Activated CD8-positive, alpha-beta memory T cell treated with anti-CD3 and anti-CD28 coated beads, Interleukin-2, amount 10 ng/mL, durations not matched to agents 7 days and 5 days (primary cell): ENCODE measurements at regions of chr3 and their contacts with region 1.

Region 1: DNA sequence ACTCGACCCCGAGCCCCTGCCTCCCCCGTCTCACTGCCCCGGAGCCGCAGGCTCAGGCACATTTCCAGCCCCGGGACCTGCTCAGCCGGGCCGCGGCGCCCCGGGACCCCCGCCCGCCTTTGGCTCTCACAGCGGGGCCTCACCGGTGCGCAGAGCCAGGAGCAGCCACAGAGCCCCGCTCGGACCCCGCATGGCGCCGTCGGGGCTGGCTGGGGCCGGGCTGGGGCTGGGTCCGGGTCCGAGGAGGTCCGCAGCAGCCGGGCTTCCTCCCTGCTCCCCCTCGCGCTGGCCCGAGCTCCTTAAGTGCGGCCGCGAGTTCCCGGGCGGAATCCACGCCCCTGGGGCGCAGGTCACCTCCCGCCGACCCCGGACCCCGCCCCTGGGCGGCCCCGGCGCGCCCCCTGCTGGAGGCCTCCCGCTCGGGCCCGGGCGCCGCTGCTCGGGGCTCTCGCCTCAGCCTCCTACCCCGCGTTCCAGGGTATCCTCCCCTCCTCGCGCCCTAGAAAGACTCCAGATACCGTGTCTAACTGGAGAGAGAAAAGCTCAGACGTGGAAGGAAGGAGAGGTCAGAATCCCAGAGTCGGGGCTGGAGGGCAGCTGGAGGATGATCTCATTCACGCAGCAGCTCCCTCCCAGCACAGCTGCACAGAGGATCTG is at the start of gene MELTF:
- DNase-seq: peak; percentile 71
- ATAC-seq: peak; percentile 91
- H3K4me3 Mint-ChIP-seq: peak within 1 kb of the TSS; percentile 69
- H3K27ac Mint-ChIP-seq: no peak within 1 kb of the TSS
- H3K4me1 Mint-ChIP-seq: peaks cover 10% of the 10 kb centered on the region
- H3K27me3 Mint-ChIP-seq: peaks cover 10% of the 10 kb centered on the region
- total RNA-seq, gene MELTF: 3.3 TPM

Region 2: DNA sequence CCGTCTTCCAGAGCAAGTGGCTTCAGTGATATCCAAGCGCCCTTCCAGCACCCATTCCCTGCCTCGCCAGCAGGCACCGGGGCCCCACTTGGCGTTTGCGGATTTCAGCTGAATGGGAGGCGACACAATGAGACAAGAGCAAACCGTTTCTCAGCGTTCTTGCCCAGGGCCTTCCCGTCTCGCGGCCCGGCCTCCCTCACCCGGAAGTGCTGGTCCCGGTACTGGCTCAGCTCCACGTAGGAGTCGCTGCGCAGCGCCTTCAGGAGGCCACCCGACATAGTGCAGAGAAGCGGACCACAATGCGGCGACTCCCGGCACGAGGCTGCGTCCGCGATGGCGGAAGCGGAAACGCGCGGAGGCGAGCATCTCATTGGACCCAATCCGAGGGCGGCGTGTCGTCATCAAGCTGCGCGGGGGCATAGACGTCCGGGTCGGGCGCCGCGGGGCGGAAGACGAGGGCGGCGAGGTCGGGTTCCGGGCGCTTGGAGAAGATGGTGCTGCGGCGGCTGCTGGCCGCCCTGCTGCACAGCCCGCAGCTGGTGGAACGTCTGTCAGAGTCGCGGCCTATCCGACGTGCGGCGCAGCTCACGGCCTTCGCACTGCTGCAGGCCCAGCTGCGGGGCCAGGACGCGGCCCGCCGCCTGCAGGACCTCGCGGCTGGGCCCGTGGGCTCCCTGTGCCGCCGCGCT is 87.3 kb before region 1 on chr3 and contains the start of gene NCBP2:
- CTCF ChIA-PET with region 1: interaction called, 10 read pairs
- DNase-seq: peak; percentile 99
- ATAC-seq: peak; percentile 91
- H3K4me3 Mint-ChIP-seq: peak within 1 kb of the TSS; percentile 87
- H3K27ac Mint-ChIP-seq: peak within 1 kb of the TSS; percentile 92
- H3K4me1 Mint-ChIP-seq: peaks cover 50% of the 10 kb centered on the region
- H3K27me3 Mint-ChIP-seq: no peaks in the 10 kb centered on the region
- total RNA-seq, gene NCBP2: 52.5 to 68.9 TPM

Region 3: GRCh38 chr3:197002701-197003454 is 26.8 kb before region 1 on chr3:
- CTCF ChIA-PET with region 1: interaction called, 38 read pairs
- DNase-seq: peak; percentile 76
- ATAC-seq: peak; percentile 84
- H3K4me3 Mint-ChIP-seq: peak overlapping the region; percentile 73
- H3K27ac Mint-ChIP-seq: no peak overlapping the region
- H3K4me1 Mint-ChIP-seq: peaks cover 9% of the 10 kb centered on the region
- H3K27me3 Mint-ChIP-seq: peaks cover 2% of the 10 kb centered on the region

Region 4: GRCh38 chr3:197010556-197011351 is 18.9 kb before region 1 on chr3:
- CTCF ChIA-PET with region 1: interaction called, 11 read pairs
- DNase-seq: no peak
- ATAC-seq: no peak
- H3K4me3 Mint-ChIP-seq: no peak overlapping the region
- H3K27ac Mint-ChIP-seq: no peak overlapping the region
- H3K4me1 Mint-ChIP-seq: no peaks in the 10 kb centered on the region
- H3K27me3 Mint-ChIP-seq: no peaks in the 10 kb centered on the region

Region 5: GRCh38 chr3:197015766-197016736 is 13.6 kb before region 1 on chr3:
- CTCF ChIA-PET with region 1: interaction called, 10 read pairs
- DNase-seq: no peak
- ATAC-seq: no peak
- H3K4me3 Mint-ChIP-seq: no peak overlapping the region
- H3K27ac Mint-ChIP-seq: no peak overlapping the region
- H3K4me1 Mint-ChIP-seq: no peaks in the 10 kb centered on the region
- H3K27me3 Mint-ChIP-seq: no peaks in the 10 kb centered on the region

Region 6: GRCh38 chr3:197041875-197042488 is 12.3 kb after region 1 on chr3:
- CTCF ChIA-PET with region 1: interaction called, 19 read pairs
- DNase-seq: no peak
- ATAC-seq: no peak
- H3K4me3 Mint-ChIP-seq: no peak overlapping the region
- H3K27ac Mint-ChIP-seq: no peak overlapping the region
- H3K4me1 Mint-ChIP-seq: peaks cover 2% of the 10 kb centered on the region
- H3K27me3 Mint-ChIP-seq: no peaks in the 10 kb centered on the region

Region 7: DNA sequence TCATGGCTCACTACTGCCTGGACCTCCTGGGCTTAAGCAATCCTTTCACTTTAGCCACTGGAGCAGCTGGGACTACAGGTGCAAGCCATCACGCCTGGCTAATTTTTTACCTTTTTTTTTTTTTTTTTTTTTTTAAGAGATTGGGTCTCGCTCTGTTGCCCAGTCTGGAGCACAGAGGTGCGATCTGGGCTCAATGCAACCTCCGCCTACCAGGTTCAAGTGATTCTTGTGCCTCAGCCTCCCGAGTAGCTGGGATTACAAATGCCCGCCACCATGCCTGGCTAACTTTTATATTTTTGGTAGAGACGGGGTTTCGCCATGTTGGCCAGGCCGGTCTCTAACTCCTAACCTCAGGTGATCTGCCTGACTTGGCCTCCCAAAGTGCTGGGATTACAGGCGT is 50.7 kb after region 1 on chr3:
- CTCF ChIA-PET with region 1: no interaction called
- DNase-seq: no peak
- ATAC-seq: no peak
- H3K4me3 Mint-ChIP-seq: no peak overlapping the region
- H3K27ac Mint-ChIP-seq: no peak overlapping the region
- H3K4me1 Mint-ChIP-seq: peaks cover 3% of the 10 kb centered on the region
- H3K27me3 Mint-ChIP-seq: no peaks in the 10 kb centered on the region